ENCODE measurements at regions of chr2 and their contacts with region 1.

Region 1: GRCh38 chr2:65264821-65265670 is 37.4 kb downstream of the ACTR2 start:
- DNase-seq: peak in 1 of 5 donors; percentile 51
- H3K4me3 ChIP-seq: no peak overlapping the region
- H3K27ac ChIP-seq: no peak overlapping the region
- H3K4me1 ChIP-seq: no peaks in the 10 kb centered on the region
- H3K27me3 ChIP-seq: no peaks in the 10 kb centered on the region
- CTCF ChIP-seq: peak; percentile 27 to 78 (median 76)
- EP300 ChIP-seq: no peak
- POLR2A ChIP-seq: no peak

Region 2: DNA sequence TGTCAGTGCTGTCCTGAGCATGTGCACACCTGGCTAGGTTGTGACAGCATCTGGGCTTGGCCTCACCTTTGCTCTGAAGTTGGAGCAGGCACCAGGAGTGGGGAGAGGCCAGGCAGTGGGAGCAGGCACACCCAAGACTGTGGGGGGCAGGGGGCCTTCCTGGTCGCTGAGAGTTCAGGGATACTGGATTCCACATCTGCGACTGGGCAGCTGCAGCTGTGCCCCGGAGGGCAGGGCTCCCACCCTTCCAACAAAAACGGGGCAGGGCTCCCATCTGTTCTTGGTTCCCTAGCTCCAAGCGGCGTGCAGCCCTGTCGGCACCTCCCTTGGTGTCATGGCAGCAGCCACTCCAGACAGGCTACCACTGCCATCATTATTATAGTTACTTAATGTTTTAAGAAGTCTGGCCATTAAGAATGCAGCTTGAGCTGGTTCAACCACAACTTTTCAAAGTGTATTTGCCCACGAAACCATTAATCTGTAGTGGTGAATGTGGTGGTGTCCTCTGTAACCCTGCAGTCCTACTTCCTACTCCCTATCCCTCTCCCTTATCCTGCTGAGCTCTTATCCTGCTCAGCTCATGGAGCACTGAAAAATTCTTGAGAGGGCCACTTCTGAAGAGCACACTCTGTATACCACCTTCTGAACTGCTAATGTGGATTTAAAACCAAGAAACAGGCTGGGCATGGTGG is 87.1 kb before region 1 on chr2:
- intact Hi-C with region 1: no loop called
- DNase-seq: no peak
- H3K4me3 ChIP-seq: no peak overlapping the region
- H3K27ac ChIP-seq: no peak overlapping the region
- H3K4me1 ChIP-seq: no peaks in the 10 kb centered on the region
- H3K27me3 ChIP-seq: no peaks in the 10 kb centered on the region
- CTCF ChIP-seq: no peak
- EP300 ChIP-seq: no peak
- POLR2A ChIP-seq: no peak

Region 3: GRCh38 chr2:65432227-65433190 is 167.5 kb after region 1 on chr2 and contains the start of gene SPRED2:
- intact Hi-C with region 1: loop called in 2 of 4 experiments (anchors 10 kb)
- DNase-seq: peak; percentile 93 to 97 (median 94)
- H3K4me3 ChIP-seq: peak within 1 kb of the TSS; percentile 93
- H3K27ac ChIP-seq: peak within 1 kb of the TSS; percentile 89 to 91
- H3K4me1 ChIP-seq: peaks cover 4% of the 10 kb centered on the region
- H3K27me3 ChIP-seq: no peaks in the 10 kb centered on the region
- CTCF ChIP-seq: peak in 2 of 3 donors; percentile 14 to 17
- EP300 ChIP-seq: no peak
- POLR2A ChIP-seq: peak; percentile 81
- total RNA-seq, gene SPRED2: 13.1 to 32.9 (median 17.6) TPM

Region 4: GRCh38 chr2:65545837-65546805 is 281.1 kb after region 1 on chr2:
- intact Hi-C with region 1: loop called (anchors 5 to 10 kb)
- DNase-seq: no peak
- H3K4me3 ChIP-seq: no peak overlapping the region
- H3K27ac ChIP-seq: no peak overlapping the region
- H3K4me1 ChIP-seq: no peaks in the 10 kb centered on the region
- H3K27me3 ChIP-seq: no peaks in the 10 kb centered on the region
- CTCF ChIP-seq: no peak
- EP300 ChIP-seq: no peak
- POLR2A ChIP-seq: no peak

Region 5: DNA sequence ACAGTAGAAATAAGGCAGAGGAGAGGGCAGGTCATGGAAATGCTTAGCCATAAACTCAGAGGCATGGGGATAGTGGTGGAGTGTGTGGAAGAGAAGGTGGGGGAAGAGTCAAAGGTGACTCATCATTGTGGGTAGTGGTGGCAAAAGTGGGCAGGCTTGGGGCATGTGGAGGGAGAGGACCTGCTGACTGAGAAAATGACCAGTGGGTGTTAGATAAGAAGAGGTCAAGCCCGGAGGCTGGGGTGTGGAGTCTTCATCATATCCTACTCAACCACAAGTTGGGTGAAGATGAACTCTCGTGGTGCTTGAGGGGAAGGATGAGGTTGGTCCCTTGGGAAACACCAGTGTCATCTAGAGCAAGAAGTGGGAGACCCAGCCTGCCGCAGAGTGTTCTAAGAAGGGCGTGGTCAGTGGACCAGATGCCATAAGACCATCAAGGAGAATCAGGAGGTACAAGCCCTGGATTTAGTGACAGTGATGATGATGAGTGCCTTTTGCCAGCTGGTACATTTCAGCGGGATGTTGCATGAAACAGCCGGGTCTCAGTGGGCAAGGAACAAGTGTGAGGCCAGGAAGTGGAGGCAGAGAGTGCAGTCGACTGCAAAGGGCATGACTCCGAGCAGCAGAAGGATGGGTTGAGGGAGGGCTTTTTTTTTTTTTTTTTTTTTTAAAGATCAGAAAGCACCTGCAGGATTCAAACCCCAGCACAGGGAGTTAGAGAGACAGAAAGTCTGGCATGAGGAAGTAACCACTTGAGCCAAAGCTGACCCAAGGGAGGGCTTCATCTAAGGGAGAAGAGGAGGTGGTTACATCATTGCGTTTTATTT is 289.9 kb after region 1 on chr2:
- intact Hi-C with region 1: loop called in 2 of 4 experiments (anchors 5 to 10 kb)
- DNase-seq: no peak
- H3K4me3 ChIP-seq: no peak overlapping the region
- H3K27ac ChIP-seq: no peak overlapping the region
- H3K4me1 ChIP-seq: no peaks in the 10 kb centered on the region
- H3K27me3 ChIP-seq: no peaks in the 10 kb centered on the region
- CTCF ChIP-seq: no peak
- EP300 ChIP-seq: no peak
- POLR2A ChIP-seq: no peak

Measured in ovary (tissue), 10 donors.